ENCODE measurements at regions of chr7 and their contacts with region 1.

Region 1: GRCh38 chr7:100177045-100178001 is at the starts of genes GPC2 and STAG3:
- DNase-seq: peak; percentile 95 to 96 (median 96)
- H3K4me3 ChIP-seq: peak within 1 kb of the TSS; percentile 30 to 82 (median 57)
- H3K4me3 Mint-ChIP-seq: peak within 1 kb of the TSS; percentile 76 to 85
- H3K27ac ChIP-seq: no peak within 1 kb of the TSS
- H3K27ac Mint-ChIP-seq: peak within 1 kb of the TSS in 2 of 7 donors; percentile 35 to 54
- H3K4me1 ChIP-seq: peaks cover 13 to 18% of the 10 kb centered on the region in 2 donors
- H3K4me1 Mint-ChIP-seq: peaks cover 18% of the 10 kb centered on the region
- H3K27me3 ChIP-seq: peaks cover under 1 to 11% of the 10 kb centered on the region in 2 donors
- H3K27me3 Mint-ChIP-seq: peaks cover 26 to 54% (median 41%) of the 10 kb centered on the region in 3 donors
- CTCF ChIP-seq: no peak
- polyA plus RNA-seq, gene GPC2: 0.91 TPM in 1 of 3 donors, not detected in the others
- polyA plus RNA-seq, gene STAG3: 0.39 TPM in 2 of 3 donors, not detected in the other

Region 2: DNA sequence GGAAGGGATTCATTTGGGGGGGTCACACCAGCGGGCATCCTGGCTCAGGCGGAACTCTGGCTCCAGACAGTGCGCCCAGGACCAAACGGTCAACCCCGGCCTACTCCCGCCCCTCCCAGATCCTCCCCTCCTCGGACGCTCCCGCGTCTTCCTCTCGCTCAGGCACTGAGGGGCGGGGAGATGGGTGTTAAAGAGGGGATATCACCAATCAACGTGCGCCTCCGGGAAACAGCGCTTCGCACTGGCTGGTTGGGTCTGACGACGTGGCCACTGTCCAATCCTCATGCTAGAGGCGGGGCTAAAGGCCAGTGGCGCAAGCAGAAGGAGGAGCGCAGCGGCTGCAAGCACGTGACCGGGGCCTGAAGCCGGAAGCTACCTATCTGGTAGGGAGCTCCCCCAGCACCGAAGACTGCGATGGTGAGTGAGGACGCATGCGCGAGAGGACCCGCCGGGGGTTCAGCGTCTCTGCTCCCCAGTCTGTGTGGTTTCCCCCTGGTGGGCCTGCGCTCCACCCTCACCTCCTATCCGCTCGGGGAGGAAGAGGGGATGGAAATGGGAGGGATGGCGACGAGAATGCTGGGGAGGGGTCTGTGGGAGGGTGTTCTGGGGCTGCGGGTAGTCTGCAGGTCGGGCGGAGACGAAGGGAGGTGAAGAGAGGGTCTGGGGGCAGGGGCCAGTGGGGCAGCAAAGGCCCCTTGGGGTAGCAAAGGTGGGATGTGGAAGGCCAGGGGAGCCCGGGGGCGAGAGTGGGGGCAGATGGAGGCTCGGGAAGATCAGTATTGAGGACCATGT is 28.6 kb before region 1 on chr7 and contains the start of gene LAMTOR4:
- intact Hi-C with region 1: loop called in 1 of 2 experiments (anchors 2 kb)
- DNase-seq: peak; percentile 98 to 99 (median 99)
- H3K4me3 ChIP-seq: peak within 1 kb of the TSS; percentile 83 to 100 (median 97)
- H3K4me3 Mint-ChIP-seq: peak within 1 kb of the TSS; percentile 94 to 95
- H3K27ac ChIP-seq: peak within 1 kb of the TSS; percentile 75 to 97
- H3K27ac Mint-ChIP-seq: peak within 1 kb of the TSS; percentile 92 to 98 (median 95)
- H3K4me1 ChIP-seq: peaks cover 55 to 65% of the 10 kb centered on the region in 2 donors
- H3K4me1 Mint-ChIP-seq: peaks cover 59% of the 10 kb centered on the region
- H3K27me3 ChIP-seq: no peaks in the 10 kb centered on the region
- H3K27me3 Mint-ChIP-seq: no peaks in the 10 kb centered on the region
- CTCF ChIP-seq: no peak
- polyA plus RNA-seq, gene LAMTOR4: 533 to 754 (median 621) TPM

Measured in CD14-positive monocyte (primary cell).